ENCODE measurements at regions of chr7 and their contacts with region 1.

Region 1: GRCh38 chr7:20598459-20599309 is 16.8 kb upstream of the ABCB5 start:
- DNase-seq: peak; percentile 11
- H3K4me3 ChIP-seq: no peak overlapping the region
- H3K27ac ChIP-seq: no peak overlapping the region
- H3K27me3 ChIP-seq: no peaks in the 10 kb centered on the region
- CTCF ChIP-seq: peak; percentile 81

Region 2: DNA sequence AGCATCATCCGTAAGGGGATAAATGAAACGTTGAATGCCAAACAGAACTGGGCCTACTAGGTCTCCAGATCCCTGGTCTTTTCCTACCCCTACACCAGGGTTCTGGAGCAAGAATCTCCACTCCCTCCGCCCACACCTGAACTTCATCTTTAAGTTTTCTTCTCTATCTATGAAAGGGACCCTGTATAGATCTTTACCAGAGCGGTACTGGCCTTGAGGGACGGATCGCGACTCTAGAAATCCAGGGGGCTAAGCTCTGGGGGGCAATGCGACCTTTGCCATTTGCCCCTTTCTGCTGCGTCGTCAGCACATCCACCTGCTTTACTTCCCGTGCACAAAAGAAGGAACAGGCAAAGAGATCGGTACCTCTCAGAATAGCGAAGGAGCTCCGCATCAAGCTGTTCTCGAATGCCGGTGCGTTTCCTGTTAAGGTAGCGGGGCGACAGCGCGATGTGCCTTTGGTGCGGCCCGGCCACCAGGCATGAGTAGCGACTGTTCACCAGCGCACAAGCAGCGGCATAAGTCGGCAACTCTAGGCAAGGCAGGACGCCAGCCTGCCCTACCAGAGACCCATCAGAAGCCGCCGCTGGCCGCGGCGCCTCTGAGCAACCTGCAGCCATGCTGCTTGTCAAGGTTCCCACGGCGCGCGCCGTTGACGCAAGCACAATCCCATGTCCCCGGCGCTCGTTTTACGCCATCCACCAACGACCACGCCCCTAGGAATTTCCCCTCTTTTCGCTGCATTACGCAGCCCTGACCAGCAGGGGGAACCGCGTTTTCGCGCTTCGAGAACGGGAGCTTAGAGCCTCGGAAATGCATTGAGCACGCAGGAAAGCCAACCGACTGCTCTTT is 890.1 kb before region 1 on chr7 and contains the start of gene POLR1F:
- CTCF ChIA-PET with region 1: interaction called, 399 read pairs
- POLR2A ChIA-PET with region 1: interaction called, 3 read pairs
- DNase-seq: peak; percentile 85
- H3K4me3 ChIP-seq: peak within 1 kb of the TSS; percentile 98
- H3K27ac ChIP-seq: peak within 1 kb of the TSS; percentile 47
- H3K27me3 ChIP-seq: no peaks in the 10 kb centered on the region
- CTCF ChIP-seq: peak; percentile 93
- polyA plus RNA-seq, gene POLR1F: 14.8 and 23.6 TPM in 2 replicates

Region 3: DNA sequence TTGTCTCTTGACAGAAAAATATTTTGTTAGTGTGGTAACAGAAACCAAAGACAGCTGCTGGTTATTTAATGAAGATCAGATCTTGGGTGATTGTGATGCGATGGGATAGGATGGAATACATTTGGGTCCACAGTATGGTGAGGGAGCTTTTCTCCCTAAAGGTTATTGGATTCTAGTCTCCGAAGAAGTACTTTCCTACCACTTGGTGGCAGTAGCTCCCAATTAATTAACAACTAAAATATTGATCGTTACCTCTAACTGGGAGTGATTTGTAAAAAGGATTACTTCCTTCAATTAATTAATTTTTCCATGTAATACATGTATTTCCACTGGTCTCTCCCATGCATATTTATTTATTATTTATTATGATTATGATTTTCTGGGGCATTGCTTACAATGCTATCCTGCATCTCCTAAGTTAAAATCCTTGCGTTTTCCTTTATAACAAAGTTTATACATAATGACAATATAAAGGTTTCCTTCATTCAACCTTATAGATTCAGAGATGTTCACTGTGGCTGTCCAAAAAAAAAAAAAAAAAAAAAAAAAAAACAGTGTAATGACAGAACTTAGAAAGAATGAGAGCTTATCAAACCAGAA is 850.8 kb before region 1 on chr7:
- CTCF ChIA-PET with region 1: interaction called, 123 read pairs
- POLR2A ChIA-PET with region 1: no interaction called
- DNase-seq: no peak
- H3K4me3 ChIP-seq: no peak overlapping the region
- H3K27ac ChIP-seq: no peak overlapping the region
- H3K27me3 ChIP-seq: no peaks in the 10 kb centered on the region
- CTCF ChIP-seq: peak; percentile 62

Region 4: DNA sequence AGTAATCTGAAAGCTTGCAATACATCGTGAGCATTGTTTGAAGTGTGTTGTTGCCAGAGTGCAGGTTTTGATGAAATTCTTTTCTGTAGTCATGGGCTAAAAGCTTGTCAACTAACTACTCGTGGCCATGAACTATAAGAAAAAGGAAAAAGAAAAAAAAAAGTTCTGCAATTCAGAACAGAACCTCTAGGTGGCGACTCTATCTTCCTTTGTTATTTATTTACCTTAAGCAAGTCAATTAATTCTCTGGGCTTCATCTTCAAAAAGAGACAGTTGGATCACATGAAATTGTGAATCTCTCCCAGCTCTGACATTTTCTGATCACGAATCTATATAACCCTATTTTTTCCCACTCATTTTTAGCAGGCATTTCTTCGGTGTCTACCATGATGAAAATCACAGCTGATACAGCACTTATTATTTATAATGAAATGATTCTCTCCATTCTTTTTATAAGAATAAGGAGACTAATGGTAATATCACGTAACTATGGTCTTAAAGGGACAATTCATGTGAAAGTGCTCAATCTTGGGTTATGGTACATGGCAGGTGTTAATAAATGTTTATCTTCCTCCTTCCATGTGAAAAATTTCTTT is 844.1 kb before region 1 on chr7:
- CTCF ChIA-PET with region 1: interaction called, 90 read pairs
- POLR2A ChIA-PET with region 1: no interaction called
- DNase-seq: no peak
- H3K4me3 ChIP-seq: no peak overlapping the region
- H3K27ac ChIP-seq: no peak overlapping the region
- H3K27me3 ChIP-seq: no peaks in the 10 kb centered on the region
- CTCF ChIP-seq: peak; percentile 74

Region 5: DNA sequence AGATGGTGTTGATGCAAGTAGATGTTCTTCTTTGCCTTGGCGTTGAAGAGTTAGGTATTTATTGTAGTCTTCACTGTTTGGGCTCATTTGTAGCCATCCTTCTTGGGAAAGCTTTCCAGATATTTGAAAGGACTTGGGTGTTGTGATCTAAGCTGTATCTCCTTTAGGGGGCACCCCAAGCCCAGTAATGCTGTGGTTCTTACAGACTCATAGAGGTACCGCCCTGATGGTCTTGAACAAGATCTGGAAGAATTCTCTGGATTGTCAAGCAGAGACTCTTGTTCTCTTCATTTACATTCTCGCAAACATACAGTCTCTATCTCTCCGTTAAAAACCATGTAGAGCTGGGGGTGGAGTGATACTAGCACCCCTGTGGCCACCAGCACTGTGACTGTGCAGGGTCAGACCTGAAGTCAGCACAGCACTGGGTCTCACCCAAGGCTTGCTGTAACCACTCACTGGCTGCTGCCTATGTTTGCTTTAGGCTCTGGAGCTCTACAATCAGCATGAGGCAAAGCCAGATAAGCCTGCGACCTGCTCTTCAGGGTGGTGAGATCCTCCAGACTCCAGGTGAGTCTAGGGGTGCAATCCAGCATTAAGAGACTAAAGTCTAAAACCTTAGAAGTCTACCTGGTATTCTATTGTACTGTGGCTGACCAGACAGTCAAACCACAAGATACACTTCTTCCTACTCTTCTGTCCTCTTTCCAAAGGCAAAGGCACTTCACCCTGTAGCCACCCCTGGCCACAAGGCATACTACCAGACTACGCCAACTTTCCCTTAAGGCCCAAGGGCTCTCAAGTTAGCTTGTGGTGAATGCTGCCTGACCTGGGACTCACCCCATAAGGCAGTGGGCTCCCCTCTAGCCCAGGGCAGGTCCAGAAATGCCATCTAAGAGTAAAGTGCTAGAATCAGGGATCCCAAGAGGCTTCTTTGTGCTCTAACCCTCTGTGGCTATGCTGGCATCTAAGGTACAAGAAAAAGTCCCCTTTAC is 615.5 kb before region 1 on chr7:
- CTCF ChIA-PET with region 1: interaction called, 58 read pairs
- POLR2A ChIA-PET with region 1: no interaction called
- DNase-seq: peak; percentile 48
- H3K4me3 ChIP-seq: no peak overlapping the region
- H3K27ac ChIP-seq: no peak overlapping the region
- H3K27me3 ChIP-seq: no peaks in the 10 kb centered on the region
- CTCF ChIP-seq: peak; percentile 63

Region 6: GRCh38 chr7:20574784-20575720 is 23.6 kb before region 1 on chr7:
- CTCF ChIA-PET with region 1: interaction called, 13 read pairs
- POLR2A ChIA-PET with region 1: no interaction called
- DNase-seq: no peak
- H3K4me3 ChIP-seq: no peak overlapping the region
- H3K27ac ChIP-seq: no peak overlapping the region
- H3K27me3 ChIP-seq: no peaks in the 10 kb centered on the region
- CTCF ChIP-seq: no peak

Region 7: DNA sequence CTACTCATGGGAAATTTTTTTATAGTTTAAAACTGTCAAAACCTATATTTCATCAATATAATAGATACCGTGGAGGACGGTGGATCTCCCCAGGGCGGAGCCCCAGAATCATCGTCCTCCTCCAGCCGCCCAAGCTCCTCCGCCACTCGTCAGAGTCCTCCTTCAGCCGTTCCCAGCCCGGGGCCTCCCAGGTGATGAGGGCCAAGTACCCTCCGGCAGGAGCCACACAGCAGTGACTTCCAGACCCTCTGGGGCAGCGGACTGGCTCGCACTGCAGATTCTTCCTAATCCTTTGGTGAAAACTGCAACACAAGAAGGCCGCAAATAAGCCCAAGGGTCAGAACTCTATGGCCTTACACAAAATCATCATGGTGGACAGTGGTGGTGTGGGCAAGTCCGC is 10.0 kb before region 1 on chr7:
- CTCF ChIA-PET with region 1: interaction called, 11 read pairs
- POLR2A ChIA-PET with region 1: no interaction called
- DNase-seq: no peak
- H3K4me3 ChIP-seq: no peak overlapping the region
- H3K27ac ChIP-seq: no peak overlapping the region
- H3K27me3 ChIP-seq: no peaks in the 10 kb centered on the region
- CTCF ChIP-seq: no peak

Measured in AG04450 (cell line).